ENCODE measurements at regions of chr15 and their contacts with region 1.

Region 1: DNA sequence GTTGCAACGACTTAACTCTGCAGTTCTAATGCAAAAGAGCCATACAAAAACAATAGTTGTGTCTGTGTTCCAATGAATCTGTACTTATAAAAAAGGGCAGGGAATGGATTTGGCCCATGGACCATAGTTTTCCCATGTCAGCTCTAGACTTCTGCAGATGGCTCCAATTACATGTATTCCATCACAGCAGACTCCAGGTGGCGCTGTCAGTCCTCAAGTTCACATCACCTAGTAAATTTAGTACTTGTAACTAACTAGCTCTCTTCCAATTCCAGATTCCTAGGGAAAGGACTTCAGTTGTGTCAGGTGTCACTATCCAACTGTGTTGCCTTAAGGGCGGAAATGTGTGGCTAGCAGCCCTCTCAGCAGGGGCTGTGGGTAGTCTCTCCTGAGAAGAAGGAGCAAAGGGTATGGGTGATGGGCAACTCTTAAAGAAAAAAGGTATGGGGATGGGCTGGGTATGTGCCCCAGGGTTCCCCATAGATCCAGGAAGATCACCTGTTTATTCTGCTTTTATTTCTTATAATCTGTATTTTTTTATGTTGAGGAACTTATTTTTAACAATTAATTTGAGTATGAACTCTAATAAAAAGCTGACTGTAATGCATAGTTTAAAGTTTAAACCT is 36.2 kb downstream of the BBS4 start:
- H3K4me3 ChIP-seq: no peak overlapping the region
- H3K27ac ChIP-seq: no peak overlapping the region
- H3K4me1 ChIP-seq: no peaks in the 10 kb centered on the region
- CTCF ChIP-seq: peak; percentile 69

Region 2: GRCh38 chr15:71800835-71801745 is 921.1 kb before region 1 on chr15:
- CTCF ChIA-PET with region 1: no interaction called
- POLR2A ChIA-PET with region 1: no interaction called
- H3K4me3 ChIP-seq: no peak overlapping the region
- H3K27ac ChIP-seq: no peak overlapping the region
- H3K4me1 ChIP-seq: peaks cover 6% of the 10 kb centered on the region
- CTCF ChIP-seq: peak; percentile 84

Region 3: DNA sequence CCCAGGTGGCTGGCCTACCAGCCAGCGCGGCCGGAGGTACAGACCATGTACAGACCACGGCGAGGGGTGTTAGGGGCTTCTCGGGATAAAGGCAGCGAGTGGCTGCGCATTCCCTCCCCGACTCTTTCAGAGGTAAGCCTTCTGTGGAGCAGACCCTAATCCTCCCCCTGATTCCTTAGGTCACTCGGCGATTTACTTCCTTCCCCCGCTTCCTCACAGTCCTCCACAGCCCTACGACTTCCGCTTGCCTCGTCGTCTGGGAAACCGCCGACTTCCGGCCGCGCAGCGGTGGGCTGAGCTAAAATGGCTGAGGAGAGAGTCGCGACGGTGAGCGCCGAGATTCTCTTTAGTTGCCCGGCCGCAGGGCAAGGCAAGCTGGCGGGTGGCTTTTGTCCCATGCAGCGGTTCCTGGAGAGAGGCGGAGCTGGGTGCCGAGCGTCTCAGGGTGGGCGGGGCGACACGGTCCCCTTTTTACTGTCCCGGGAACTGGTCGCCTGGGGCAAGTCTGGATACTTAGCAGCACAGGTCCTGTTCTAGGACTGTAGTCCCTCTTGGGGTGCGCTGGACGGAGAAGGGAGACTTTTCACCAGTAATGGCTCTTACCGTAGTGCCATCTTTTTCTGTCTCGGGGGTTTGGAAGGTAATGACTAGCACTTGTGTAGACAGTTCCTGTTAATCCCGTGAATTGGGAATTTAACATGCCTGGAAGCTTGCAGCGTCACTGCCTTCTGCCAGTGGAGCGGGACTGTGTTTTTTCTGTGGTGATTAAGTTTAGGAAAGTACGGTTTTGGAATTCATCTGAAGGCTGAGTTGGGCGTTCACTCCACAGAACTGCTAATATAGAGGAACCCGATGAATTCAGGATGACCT is 36.0 kb before region 1 on chr15 and contains the starts of genes BBS4 and HIGD2B:
- CTCF ChIA-PET with region 1: interaction called, 17 read pairs
- POLR2A ChIA-PET with region 1: no interaction called
- H3K4me3 ChIP-seq: peak within 1 kb of the TSS; percentile 91
- H3K27ac ChIP-seq: peak within 1 kb of the TSS; percentile 83
- H3K4me1 ChIP-seq: peaks cover 10% of the 10 kb centered on the region
- CTCF ChIP-seq: no peak; the same call in 1 of the 2 replicates

Region 4: GRCh38 chr15:72732516-72732915 is 10.3 kb after region 1 on chr15:
- CTCF ChIA-PET with region 1: interaction called, 73 read pairs
- POLR2A ChIA-PET with region 1: no interaction called
- H3K4me3 ChIP-seq: no peak overlapping the region
- H3K27ac ChIP-seq: no peak overlapping the region
- H3K4me1 ChIP-seq: no peaks in the 10 kb centered on the region
- CTCF ChIP-seq: no peak

Region 5: GRCh38 chr15:72751751-72752455 is 29.7 kb after region 1 on chr15:
- CTCF ChIA-PET with region 1: interaction called, 19 read pairs
- POLR2A ChIA-PET with region 1: no interaction called
- H3K4me3 ChIP-seq: no peak overlapping the region
- H3K27ac ChIP-seq: no peak overlapping the region
- H3K4me1 ChIP-seq: no peaks in the 10 kb centered on the region
- CTCF ChIP-seq: no peak

Region 6: DNA sequence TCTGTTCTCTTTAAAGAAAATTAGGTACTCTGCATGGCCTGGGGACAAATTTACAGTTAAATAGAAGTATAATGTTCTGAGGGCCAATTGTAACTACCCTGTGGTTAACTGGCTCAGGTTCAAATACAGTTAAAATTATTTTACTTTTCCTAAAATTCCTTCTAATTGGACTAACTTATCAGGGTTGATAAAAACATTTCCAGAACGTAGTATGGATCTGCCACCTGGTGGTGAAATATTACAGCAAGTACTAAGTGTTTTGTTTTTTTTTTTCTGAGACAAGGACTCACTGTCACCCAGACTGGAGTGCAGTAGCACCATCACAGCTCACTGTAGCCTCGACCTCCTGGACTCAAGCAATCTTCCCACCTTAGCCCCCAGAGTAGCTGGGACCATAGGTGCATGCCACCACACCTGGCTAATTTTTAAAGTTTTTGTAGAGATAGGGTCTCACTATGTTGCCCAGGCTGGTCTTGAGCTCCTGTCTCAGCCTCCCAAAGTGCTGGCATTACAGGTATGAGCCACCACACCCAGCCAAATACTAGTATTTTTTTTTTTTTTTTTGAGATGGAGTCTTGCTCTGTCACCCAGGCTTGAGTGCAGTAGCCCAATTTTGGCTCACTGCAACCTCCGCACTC is 359.3 kb after region 1 on chr15:
- CTCF ChIA-PET with region 1: interaction called, 15 read pairs
- POLR2A ChIA-PET with region 1: no interaction called
- H3K4me3 ChIP-seq: no peak overlapping the region
- H3K27ac ChIP-seq: no peak overlapping the region
- H3K4me1 ChIP-seq: peaks cover 12% of the 10 kb centered on the region
- CTCF ChIP-seq: peak; percentile 67

Region 7: GRCh38 chr15:73273181-73274002 is 551.2 kb after region 1 on chr15:
- CTCF ChIA-PET with region 1: interaction called, 30 read pairs
- POLR2A ChIA-PET with region 1: no interaction called
- H3K4me3 ChIP-seq: no peak overlapping the region
- H3K27ac ChIP-seq: no peak overlapping the region
- H3K4me1 ChIP-seq: no peaks in the 10 kb centered on the region
- CTCF ChIP-seq: peak; percentile 52; the same call in 1 of the 2 replicates